Panc1 (cell line): ENCODE measurements at regions of chr15 and their contacts with region 1.

Region 1: DNA sequence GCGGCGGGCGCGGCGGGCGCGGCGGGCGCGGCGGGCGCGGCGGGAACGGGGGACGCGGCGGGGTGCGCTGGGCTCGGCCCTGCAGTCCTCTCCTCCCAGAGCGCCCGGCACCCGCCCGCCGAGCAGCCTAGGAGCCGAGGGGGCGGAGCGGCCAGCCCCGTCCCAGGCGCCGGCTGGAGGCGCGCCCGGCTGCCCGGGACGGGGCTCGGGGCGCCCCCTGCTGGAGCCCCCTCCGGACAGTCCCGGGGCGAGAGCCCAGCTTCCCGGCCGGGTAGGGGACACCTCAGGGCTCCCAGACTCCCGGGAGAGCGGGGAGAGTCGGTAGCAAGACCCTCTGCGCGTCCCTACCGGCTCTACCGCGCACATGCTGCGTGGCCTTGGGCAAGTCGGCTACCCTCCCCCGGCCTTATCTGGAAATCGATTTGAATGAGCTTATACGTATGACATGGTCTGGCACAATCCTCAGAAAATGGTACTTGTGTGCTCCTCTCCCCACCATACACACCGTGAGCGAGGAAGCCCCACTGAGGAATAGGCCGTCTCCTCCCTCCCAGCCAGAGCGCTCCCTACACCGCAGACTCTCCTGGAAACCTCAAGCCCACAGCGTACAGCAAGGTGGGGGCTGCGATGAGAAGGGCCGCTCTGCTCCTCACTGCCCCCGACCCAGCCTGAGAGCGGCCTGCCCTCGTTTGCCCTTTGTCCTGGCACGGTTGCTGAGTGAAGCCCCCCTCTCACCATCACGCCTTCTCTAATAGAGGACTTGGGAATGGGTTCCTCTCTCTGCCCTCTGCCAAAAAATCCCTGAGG is at the start of gene DAPK2:
- DNase-seq: no peak
- ATAC-seq: peak; percentile 97
- H3K4me3 ChIP-seq: peak within 1 kb of the TSS; percentile 52 to 53
- H3K27ac ChIP-seq: peak within 1 kb of the TSS; percentile 48
- H3K4me1 ChIP-seq: peaks cover 14% of the 10 kb centered on the region
- H3K27me3 ChIP-seq: no peaks in the 10 kb centered on the region
- CTCF ChIP-seq: peak; percentile 96
- total RNA-seq, gene DAPK2: 10.2 TPM

Region 2: GRCh38 chr15:63752075-63752684 is 294.4 kb before region 1 on chr15:
- CTCF ChIA-PET with region 1: interaction called, 11 read pairs
- POLR2A ChIA-PET with region 1: no interaction called
- in situ Hi-C with region 1: no loop called
- intact Hi-C with region 1: no loop called
- DNase-seq: peak; percentile 51
- ATAC-seq: peak; percentile 84
- H3K4me3 ChIP-seq: no peak overlapping the region
- H3K27ac ChIP-seq: no peak overlapping the region
- H3K4me1 ChIP-seq: no peaks in the 10 kb centered on the region
- H3K27me3 ChIP-seq: no peaks in the 10 kb centered on the region
- CTCF ChIP-seq: peak; percentile 75; the same call in 1 of the 2 replicates

Region 3: DNA sequence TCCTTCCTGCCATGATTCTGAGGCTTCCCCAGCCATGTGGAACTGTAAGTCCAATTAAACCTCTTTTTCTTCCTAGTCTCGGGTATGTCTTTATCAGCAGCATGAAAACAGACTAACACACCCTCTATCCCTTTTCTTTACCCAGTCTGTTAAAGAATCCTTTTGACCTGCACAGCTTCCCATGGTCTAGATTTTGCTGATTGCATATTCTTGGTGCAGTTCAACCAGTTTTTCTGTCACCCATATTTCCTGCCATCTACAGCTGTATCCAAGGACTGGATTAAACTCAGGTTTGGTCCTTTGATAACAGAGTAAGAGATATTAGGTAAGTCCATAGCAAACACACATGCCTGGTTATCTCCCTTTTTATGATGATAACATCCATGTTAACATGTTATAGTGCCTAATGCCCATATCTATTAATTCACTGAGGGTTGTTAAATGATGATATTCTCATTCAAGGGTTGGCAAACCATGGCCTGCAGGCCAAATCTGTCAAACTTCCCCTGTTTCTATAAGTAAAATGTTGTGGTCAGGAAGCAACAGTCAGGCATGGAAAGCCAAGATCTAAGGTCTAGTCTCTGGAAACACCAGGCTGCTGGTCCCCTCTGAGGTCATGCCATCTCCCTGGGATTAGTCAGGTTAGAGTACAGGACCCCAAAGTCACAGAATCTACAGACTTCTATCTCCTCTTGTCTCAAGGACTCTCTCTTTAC is 197.9 kb before region 1 on chr15:
- CTCF ChIA-PET with region 1: no interaction called
- POLR2A ChIA-PET with region 1: no interaction called
- in situ Hi-C with region 1: no loop called
- intact Hi-C with region 1: loop called (anchors 10 kb)
- DNase-seq: no peak
- ATAC-seq: no peak
- H3K4me3 ChIP-seq: no peak overlapping the region
- H3K27ac ChIP-seq: no peak overlapping the region
- H3K4me1 ChIP-seq: no peaks in the 10 kb centered on the region
- H3K27me3 ChIP-seq: no peaks in the 10 kb centered on the region
- CTCF ChIP-seq: no peak

Region 4: DNA sequence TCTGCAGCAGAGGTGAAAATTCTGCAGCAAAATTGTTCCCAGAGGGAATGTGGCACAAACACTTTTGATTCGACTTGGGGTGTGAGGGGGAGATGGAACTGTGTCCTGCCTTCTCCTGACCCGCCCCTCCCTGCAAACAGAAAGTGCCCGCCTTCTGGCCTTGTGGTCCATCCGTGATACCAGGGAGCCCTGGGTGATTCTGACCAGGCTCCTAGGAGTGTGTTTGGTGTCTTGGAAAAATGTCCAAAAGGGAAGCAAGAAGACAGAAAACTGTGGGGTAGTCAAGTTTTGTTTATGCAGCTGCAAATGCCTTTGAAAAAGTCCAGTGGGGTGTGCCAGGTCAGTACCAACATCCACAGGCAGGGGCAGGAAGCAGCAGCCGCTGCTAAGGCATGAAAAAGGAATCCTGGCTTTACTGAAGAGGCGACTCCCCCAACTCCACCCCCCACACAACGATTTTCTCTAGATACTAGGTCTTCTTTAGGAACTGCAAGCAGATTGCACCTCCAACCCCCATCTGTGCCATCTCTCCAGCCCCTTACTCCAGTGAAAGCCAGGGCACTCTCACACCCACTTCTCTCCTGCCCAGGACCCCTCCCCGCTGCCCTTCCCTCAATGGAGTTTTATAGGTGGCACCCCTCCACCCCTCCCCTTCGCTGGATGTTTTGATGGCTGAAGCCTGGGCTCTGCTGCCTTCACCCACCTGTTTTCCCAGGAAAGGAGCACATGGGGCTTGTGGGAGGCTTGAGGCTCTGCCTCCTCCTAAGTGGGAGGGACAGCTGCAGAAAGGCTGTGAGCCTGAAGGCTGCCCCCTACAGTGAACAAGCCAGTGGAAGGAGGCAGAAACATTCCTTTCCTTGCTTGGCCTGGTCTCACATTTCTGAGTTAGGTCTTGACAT is 130.4 kb before region 1 on chr15:
- CTCF ChIA-PET with region 1: no interaction called
- POLR2A ChIA-PET with region 1: no interaction called
- in situ Hi-C with region 1: no loop called
- intact Hi-C with region 1: loop called (anchors 10 kb)
- DNase-seq: no peak
- ATAC-seq: peak; percentile 73; the same call in 1 of the 2 replicates
- H3K4me3 ChIP-seq: no peak overlapping the region
- H3K27ac ChIP-seq: peak overlapping the region; percentile 49; the same call in 1 of the 2 replicates
- H3K4me1 ChIP-seq: peaks cover 4% of the 10 kb centered on the region; the same call in 1 of the 2 replicates
- H3K27me3 ChIP-seq: no peaks in the 10 kb centered on the region
- CTCF ChIP-seq: no peak

Region 5: GRCh38 chr15:63945007-63945788 is 101.4 kb before region 1 on chr15:
- CTCF ChIA-PET with region 1: interaction called, 14 read pairs
- POLR2A ChIA-PET with region 1: no interaction called
- in situ Hi-C with region 1: no loop called
- intact Hi-C with region 1: no loop called
- DNase-seq: peak; percentile 27
- ATAC-seq: peak; percentile 91
- H3K4me3 ChIP-seq: no peak overlapping the region
- H3K27ac ChIP-seq: no peak overlapping the region
- H3K4me1 ChIP-seq: no peaks in the 10 kb centered on the region
- H3K27me3 ChIP-seq: no peaks in the 10 kb centered on the region
- CTCF ChIP-seq: peak; percentile 97